ENCODE measurements at regions of chr12 and their contacts with region 1.

Region 1: GRCh38 chr12:64679487-64679983 is 69.2 kb downstream of the RASSF3 start:
- DNase-seq: peak; percentile 54 to 91 (median 76)
- ATAC-seq: peak; percentile 68
- H3K4me3 ChIP-seq: peak overlapping the region; percentile 22 to 33
- H3K4me3 Mint-ChIP-seq: peak overlapping the region; percentile 67
- H3K27ac ChIP-seq: peak overlapping the region; percentile 71 to 94
- H3K27ac Mint-ChIP-seq: peak overlapping the region; percentile 98
- H3K4me1 ChIP-seq: peaks cover 97% of the 10 kb centered on the region
- H3K4me1 Mint-ChIP-seq: peaks cover 92% of the 10 kb centered on the region
- H3K27me3 ChIP-seq: no peaks in the 10 kb centered on the region
- H3K27me3 Mint-ChIP-seq: no peaks in the 10 kb centered on the region
- CTCF ChIP-seq: no peak

Region 2: DNA sequence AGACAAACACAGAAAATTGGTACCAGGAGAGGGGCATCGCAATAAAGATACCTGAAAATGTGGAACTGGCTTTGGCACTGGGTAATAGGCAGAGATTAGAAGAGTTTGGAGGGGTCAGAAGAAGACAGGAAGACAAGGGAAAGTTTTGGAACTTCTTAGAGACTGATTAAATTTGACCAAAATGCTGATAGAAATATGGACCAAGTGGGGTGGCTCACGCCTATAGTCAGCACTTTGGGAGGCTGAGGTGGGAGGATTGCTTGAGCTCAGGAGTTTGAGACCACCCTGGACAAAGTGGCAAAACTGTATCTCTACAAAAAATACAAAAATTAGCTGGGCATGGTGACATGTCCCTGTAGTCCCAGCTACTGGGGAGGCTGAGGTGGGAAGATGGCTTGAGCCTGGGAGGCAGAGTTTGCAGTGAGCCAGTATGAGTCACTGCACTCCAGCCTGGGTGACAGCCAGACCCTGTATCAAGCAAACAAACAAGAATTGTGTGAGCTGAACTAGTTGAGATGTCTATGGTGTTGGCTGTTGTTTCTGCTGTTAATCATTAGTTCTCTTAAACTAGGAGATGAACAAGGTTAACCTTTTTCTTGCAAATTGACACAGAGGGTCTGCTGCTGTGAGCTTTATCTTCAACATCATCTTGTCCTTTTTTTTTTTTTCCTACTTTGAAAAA is 45.7 kb before region 1 on chr12:
- CTCF ChIA-PET with region 1: no interaction called
- POLR2A ChIA-PET with region 1: interaction called, 3 read pairs
- intact Hi-C with region 1: loop called in 1 of 2 experiments (anchors 2 kb)
- DNase-seq: peak in 5 of 9 experiments; percentile 33 to 58 (median 47)
- ATAC-seq: peak; percentile 51
- H3K4me3 ChIP-seq: no peak overlapping the region
- H3K4me3 Mint-ChIP-seq: peak overlapping the region; percentile 37
- H3K27ac ChIP-seq: peak overlapping the region in 1 of 2 experiments; percentile 42
- H3K27ac Mint-ChIP-seq: peak overlapping the region; percentile 73
- H3K4me1 ChIP-seq: peaks cover 85% of the 10 kb centered on the region
- H3K4me1 Mint-ChIP-seq: peaks cover 86% of the 10 kb centered on the region
- H3K27me3 ChIP-seq: no peaks in the 10 kb centered on the region
- H3K27me3 Mint-ChIP-seq: no peaks in the 10 kb centered on the region
- CTCF ChIP-seq: no peak

Region 3: GRCh38 chr12:64669270-64669842 is 10.2 kb before region 1 on chr12:
- CTCF ChIA-PET with region 1: interaction called, 90 read pairs
- POLR2A ChIA-PET with region 1: interaction called, 96 read pairs
- intact Hi-C with region 1: loop called (anchors 1 kb)
- DNase-seq: peak; percentile 18 to 94 (median 57)
- ATAC-seq: peak; percentile 79
- H3K4me3 ChIP-seq: peak overlapping the region; percentile 51 to 57
- H3K4me3 Mint-ChIP-seq: peak overlapping the region; percentile 87
- H3K27ac ChIP-seq: peak overlapping the region; percentile 77 to 94
- H3K27ac Mint-ChIP-seq: peak overlapping the region; percentile 98
- H3K4me1 ChIP-seq: peaks cover 92% of the 10 kb centered on the region
- H3K4me1 Mint-ChIP-seq: peaks cover 90% of the 10 kb centered on the region
- H3K27me3 ChIP-seq: no peaks in the 10 kb centered on the region
- H3K27me3 Mint-ChIP-seq: no peaks in the 10 kb centered on the region
- CTCF ChIP-seq: no peak

Region 4: GRCh38 chr12:64759035-64759901 is 79.7 kb after region 1 on chr12 and contains the start of gene GNS:
- CTCF ChIA-PET with region 1: no interaction called
- POLR2A ChIA-PET with region 1: no interaction called
- intact Hi-C with region 1: no loop called
- DNase-seq: peak; percentile 81 to 95 (median 92)
- ATAC-seq: peak; percentile 86
- H3K4me3 ChIP-seq: peak within 1 kb of the TSS; percentile 70 to 80
- H3K4me3 Mint-ChIP-seq: peak within 1 kb of the TSS; percentile 97
- H3K27ac ChIP-seq: peak within 1 kb of the TSS; percentile 44 to 80
- H3K27ac Mint-ChIP-seq: peak within 1 kb of the TSS; percentile 93
- H3K4me1 ChIP-seq: peaks cover 24% of the 10 kb centered on the region
- H3K4me1 Mint-ChIP-seq: peaks cover 57% of the 10 kb centered on the region
- H3K27me3 ChIP-seq: no peaks in the 10 kb centered on the region
- H3K27me3 Mint-ChIP-seq: no peaks in the 10 kb centered on the region
- CTCF ChIP-seq: no peak
- total RNA-seq, gene GNS: 6.3 to 7.7 TPM

Measured in CD8-positive, alpha-beta T cell (primary cell).